Lower leg skin (tissue), 4 donors: ENCODE measurements at regions of chr1 and their contacts with region 1.

Region 1: GRCh38 chr1:26259578-26259977 is 20.3 kb upstream of the SH3BGRL3 start:
- DNase-seq: no peak
- H3K4me3 ChIP-seq: no peak overlapping the region
- CTCF ChIP-seq: no peak
- POLR2A ChIP-seq: no peak

Region 2: GRCh38 chr1:25140073-25140797 is 1119.3 kb before region 1 on chr1:
- intact Hi-C with region 1: no loop called
- DNase-seq: no peak
- H3K4me3 ChIP-seq: no peak overlapping the region
- CTCF ChIP-seq: no peak
- POLR2A ChIP-seq: no peak

Region 3: DNA sequence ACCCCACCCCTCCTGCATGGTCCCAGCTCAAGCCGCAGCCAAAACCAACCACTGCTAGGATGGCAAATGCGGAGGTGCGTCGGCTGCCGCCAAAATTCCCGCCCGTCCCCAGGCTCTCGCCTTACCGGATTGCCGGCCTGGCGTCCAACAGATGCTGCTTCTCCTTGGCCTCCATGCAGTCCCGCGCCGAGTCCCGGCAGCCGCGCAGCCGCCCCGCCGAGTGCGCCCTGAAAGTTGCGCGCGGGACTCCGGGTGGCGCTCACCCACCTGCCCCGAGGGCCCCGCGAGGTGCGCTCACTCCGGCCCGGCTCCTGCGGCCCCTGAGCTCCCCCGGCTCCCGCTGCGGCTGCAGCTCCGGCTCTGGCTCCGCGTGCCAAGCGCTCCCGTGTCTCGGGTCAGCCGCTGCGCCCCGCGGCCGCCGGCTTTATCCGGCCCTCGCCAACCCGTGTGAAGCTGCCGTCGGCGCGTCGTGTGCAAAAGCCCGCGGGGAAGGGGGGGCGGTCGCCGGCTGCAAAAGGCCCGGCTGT is 213.8 kb before region 1 on chr1 and contains the start of gene SLC30A2:
- intact Hi-C with region 1: loop called (anchors 10 kb)
- DNase-seq: no peak
- H3K4me3 ChIP-seq: no peak within 1 kb of the TSS
- CTCF ChIP-seq: no peak
- POLR2A ChIP-seq: no peak
- total RNA-seq, gene SLC30A2: 0.13 to 1.8 (median 0.42) TPM

Region 4: GRCh38 chr1:26233903-26234643 is 25.5 kb before region 1 on chr1 and contains the start of gene CEP85:
- intact Hi-C with region 1: no loop called
- DNase-seq: peak; percentile 97 to 99
- H3K4me3 ChIP-seq: peak within 1 kb of the TSS; percentile 48
- CTCF ChIP-seq: peak in 1 of 3 donors; percentile 43
- POLR2A ChIP-seq: no peak
- total RNA-seq, gene CEP85: 13.0 to 17.2 (median 14.1) TPM

Region 5: GRCh38 chr1:26399034-26399433 is 139.5 kb after region 1 on chr1:
- intact Hi-C with region 1: no loop called
- DNase-seq: no peak
- H3K4me3 ChIP-seq: no peak overlapping the region
- CTCF ChIP-seq: no peak
- POLR2A ChIP-seq: no peak